Right lobe of liver (tissue), 6 donors: ENCODE measurements at regions of chr11 and their contacts with region 1.

Region 1: GRCh38 chr11:129331871-129332274 is 43.8 kb upstream of the BARX2 start:
- DNase-seq: peak; percentile 83 to 89 (median 88)
- ATAC-seq: peak; percentile 98 to 99 (median 99)
- H3K4me3 ChIP-seq: no peak overlapping the region
- H3K27ac ChIP-seq: no peak overlapping the region
- H3K4me1 ChIP-seq: peaks cover 0 to 12% (median 0%) of the 10 kb centered on the region in 4 donors
- H3K27me3 ChIP-seq: no peaks in the 10 kb centered on the region
- CTCF ChIP-seq: peak; percentile 89 to 94 (median 93)
- POLR2A ChIP-seq: no peak

Region 2: DNA sequence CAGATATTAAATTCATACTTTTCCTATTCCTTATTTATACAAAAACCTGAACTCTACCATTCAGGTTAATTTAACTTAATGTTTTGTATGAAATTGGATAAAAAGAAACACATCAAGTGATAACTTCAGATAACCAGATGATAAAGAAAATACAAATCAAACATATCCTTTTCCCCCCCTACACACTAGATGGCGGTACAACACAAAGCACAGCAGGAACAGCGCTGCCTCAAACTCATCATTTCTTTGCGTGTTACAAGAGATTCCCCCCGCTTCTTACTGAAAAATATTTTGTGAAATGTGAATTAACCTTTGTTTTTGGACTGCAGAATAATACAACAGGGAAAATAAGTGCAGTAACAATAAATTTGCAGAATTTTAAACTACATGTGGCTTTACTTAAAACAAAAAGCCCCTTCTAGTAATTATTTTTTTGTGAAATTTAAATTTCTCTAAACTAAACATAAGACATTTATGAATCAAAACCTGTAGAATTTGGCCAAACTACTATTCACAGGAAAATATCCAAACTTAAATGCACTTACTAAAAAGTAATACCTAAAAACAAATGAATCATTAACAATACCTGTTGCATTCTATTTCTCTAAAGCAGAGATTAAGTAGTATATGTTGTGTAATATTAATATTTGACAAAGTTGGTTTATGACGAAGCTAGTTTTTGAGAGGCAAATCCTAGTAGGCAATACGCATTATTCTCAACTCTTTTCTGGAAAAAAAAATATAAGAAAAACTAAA is 214.1 kb before region 1 on chr11:
- intact Hi-C with region 1: loop called (anchors 10 kb)
- DNase-seq: peak in 1 of 3 donors; percentile 46
- ATAC-seq: peak; percentile 84 to 91 (median 87)
- H3K4me3 ChIP-seq: no peak overlapping the region
- H3K27ac ChIP-seq: no peak overlapping the region
- H3K4me1 ChIP-seq: peaks cover 0 to 8% (median 0%) of the 10 kb centered on the region in 4 donors
- H3K27me3 ChIP-seq: no peaks in the 10 kb centered on the region
- CTCF ChIP-seq: peak; percentile 76 to 91 (median 84)
- POLR2A ChIP-seq: no peak